IMR-90 (cell line): ENCODE measurements at regions of chr17 and their contacts with region 1.

Region 1: DNA sequence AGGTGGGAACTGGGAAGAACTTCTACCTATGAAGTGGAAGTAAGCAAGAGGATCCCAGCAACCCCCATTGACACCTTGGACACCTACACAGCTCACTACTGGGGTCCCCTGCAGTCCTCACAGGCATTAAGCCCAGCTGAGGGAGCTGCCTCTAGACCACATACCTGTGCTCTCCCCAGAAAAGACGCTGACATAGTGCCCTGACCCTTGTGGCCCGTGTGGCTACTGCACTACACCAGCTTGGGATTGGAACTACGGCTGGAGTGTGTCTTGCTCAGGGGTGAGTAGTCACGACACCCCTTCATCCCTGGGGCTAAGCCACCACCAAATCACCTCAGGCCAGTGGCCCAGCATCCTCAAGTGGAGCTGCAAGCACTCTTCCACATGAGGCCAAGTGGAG is 54.2 kb upstream of the NSRP1 start:
- DNase-seq: no peak
- ATAC-seq: no peak
- H3K4me3 ChIP-seq: no peak overlapping the region
- H3K27ac ChIP-seq: no peak overlapping the region
- H3K4me1 ChIP-seq: no peaks in the 10 kb centered on the region
- H3K27me3 ChIP-seq: peaks cover 16% of the 10 kb centered on the region
- CTCF ChIP-seq: no peak
- POLR2A ChIP-seq: no peak
- RAD21 ChIP-seq: no peak

Region 2: GRCh38 chr17:29954405-29954804 is 108.0 kb before region 1 on chr17:
- CTCF ChIA-PET with region 1: no interaction called
- POLR2A ChIA-PET with region 1: no interaction called
- dilution Hi-C with region 1: no loop called
- in situ Hi-C with region 1: loop called (anchors 10 kb)
- intact Hi-C with region 1: no loop called
- DNase-seq: no peak
- ATAC-seq: no peak
- H3K4me3 ChIP-seq: no peak overlapping the region
- H3K27ac ChIP-seq: no peak overlapping the region
- H3K4me1 ChIP-seq: peaks cover 2% of the 10 kb centered on the region; the same call in 1 of the 2 replicates
- H3K27me3 ChIP-seq: peaks cover 4% of the 10 kb centered on the region; the same call in 1 of the 2 replicates
- CTCF ChIP-seq: no peak
- POLR2A ChIP-seq: no peak
- RAD21 ChIP-seq: no peak

Region 3: GRCh38 chr17:30084788-30085187 is 22.4 kb after region 1 on chr17:
- CTCF ChIA-PET with region 1: no interaction called
- POLR2A ChIA-PET with region 1: no interaction called
- dilution Hi-C with region 1: no loop called
- in situ Hi-C with region 1: no loop called
- intact Hi-C with region 1: no loop called
- DNase-seq: no peak
- ATAC-seq: no peak
- H3K4me3 ChIP-seq: no peak overlapping the region
- H3K27ac ChIP-seq: no peak overlapping the region
- H3K4me1 ChIP-seq: no peaks in the 10 kb centered on the region
- H3K27me3 ChIP-seq: peaks cover 32% of the 10 kb centered on the region
- CTCF ChIP-seq: no peak
- POLR2A ChIP-seq: no peak
- RAD21 ChIP-seq: no peak

Region 4: GRCh38 chr17:30550512-30551273 is 488.3 kb after region 1 on chr17:
- CTCF ChIA-PET with region 1: no interaction called
- POLR2A ChIA-PET with region 1: no interaction called
- dilution Hi-C with region 1: no loop called
- in situ Hi-C with region 1: no loop called
- intact Hi-C with region 1: no loop called
- DNase-seq: peak; percentile 19
- ATAC-seq: 0 out of 2 replicates have a peak, but pooled peaks have one; percentile 32
- H3K4me3 ChIP-seq: no peak overlapping the region
- H3K27ac ChIP-seq: no peak overlapping the region
- H3K4me1 ChIP-seq: no peaks in the 10 kb centered on the region
- H3K27me3 ChIP-seq: peaks cover 15% of the 10 kb centered on the region
- CTCF ChIP-seq: no peak
- POLR2A ChIP-seq: no peak
- RAD21 ChIP-seq: no peak